Psoas muscle (tissue), 8 donors: ENCODE measurements at regions of chrX and their contacts with region 1.

Region 1: DNA sequence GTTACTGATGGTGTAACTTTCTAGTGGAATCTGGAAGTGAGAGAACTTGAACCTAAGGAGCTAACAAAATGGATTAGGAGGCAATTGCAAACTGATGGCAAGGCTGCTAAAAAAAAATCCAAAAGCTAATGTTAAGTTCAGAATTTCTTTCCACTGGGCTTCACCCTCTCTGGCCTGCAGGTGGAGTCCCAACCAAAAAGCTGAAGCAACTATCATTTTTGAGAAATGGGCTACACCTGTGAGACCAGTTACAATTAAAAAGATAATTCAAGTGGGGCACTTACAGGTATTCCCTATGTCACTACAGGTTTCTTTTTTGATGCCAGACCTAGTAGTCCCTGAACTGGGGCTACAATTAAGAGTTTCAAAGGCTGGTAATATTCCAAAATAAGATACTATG is 142.1 kb upstream of the FTHL17 start:
- DNase-seq: no peak
- ATAC-seq: no peak
- H3K4me3 ChIP-seq: no peak overlapping the region
- H3K27ac ChIP-seq: no peak overlapping the region
- H3K4me1 ChIP-seq: no peaks in the 10 kb centered on the region
- H3K27me3 ChIP-seq: peaks cover 0 to under 1% (median 0%) of the 10 kb centered on the region in 3 donors
- CTCF ChIP-seq: peak; percentile 30

Region 2: DNA sequence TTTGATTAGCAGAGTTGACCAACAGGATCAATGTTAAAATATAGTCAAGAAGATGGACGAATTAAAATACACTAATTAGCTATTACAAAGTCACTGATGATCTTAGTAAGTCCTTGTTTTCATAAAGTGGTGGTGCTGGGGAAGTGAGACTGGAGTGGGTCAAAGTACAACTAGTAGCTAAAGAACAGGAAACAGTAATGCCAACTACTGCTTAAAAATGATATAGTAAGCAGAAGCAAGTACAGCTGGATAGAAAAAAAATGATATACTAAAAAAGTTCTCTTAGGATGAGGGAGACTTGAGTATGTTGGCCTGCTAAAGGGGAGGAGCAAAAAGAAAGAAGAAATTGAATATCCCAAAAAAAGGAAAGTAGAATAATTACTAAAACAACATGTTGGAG is 438.7 kb after region 1 on chrX:
- intact Hi-C with region 1: loop called (anchors 5 to 10 kb)
- DNase-seq: no peak
- ATAC-seq: no peak
- H3K4me3 ChIP-seq: no peak overlapping the region
- H3K27ac ChIP-seq: no peak overlapping the region
- H3K4me1 ChIP-seq: no peaks in the 10 kb centered on the region
- H3K27me3 ChIP-seq: no peaks in the 10 kb centered on the region
- CTCF ChIP-seq: no peak